ENCODE measurements at regions of chr16 and their contacts with region 1.

Region 1: DNA sequence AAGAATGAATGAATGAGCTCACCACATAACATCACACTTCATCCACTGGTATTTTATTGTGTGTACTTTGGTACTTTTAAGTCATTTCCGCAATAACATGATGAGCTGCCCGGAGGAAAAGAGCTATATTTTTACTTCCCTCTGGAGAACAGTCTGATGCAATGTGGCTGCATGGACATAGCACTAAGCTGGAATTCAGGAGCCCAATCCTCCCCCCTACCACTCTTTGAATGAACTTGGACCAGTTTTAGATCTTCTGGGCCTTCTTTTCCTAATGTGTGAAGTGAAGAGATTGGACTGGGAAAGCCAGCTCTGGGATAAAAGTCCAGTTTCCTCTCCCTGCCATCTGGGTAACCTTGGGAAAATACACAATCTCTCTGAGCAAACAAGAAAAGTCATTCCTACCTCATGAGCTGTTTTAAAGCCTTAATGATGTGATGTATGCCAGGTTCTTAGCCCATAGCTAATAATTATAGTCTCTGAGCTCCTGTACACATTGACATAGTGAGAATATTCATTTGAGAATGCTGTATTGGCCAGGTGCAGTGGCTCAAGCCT is 79.3 kb downstream of the ABCC12 start:
- DNase-seq: no peak
- H3K4me3 ChIP-seq: no peak overlapping the region
- H3K27ac ChIP-seq: no peak overlapping the region
- H3K27me3 ChIP-seq: peaks cover 3% of the 10 kb centered on the region
- CTCF ChIP-seq: no peak

Region 2: DNA sequence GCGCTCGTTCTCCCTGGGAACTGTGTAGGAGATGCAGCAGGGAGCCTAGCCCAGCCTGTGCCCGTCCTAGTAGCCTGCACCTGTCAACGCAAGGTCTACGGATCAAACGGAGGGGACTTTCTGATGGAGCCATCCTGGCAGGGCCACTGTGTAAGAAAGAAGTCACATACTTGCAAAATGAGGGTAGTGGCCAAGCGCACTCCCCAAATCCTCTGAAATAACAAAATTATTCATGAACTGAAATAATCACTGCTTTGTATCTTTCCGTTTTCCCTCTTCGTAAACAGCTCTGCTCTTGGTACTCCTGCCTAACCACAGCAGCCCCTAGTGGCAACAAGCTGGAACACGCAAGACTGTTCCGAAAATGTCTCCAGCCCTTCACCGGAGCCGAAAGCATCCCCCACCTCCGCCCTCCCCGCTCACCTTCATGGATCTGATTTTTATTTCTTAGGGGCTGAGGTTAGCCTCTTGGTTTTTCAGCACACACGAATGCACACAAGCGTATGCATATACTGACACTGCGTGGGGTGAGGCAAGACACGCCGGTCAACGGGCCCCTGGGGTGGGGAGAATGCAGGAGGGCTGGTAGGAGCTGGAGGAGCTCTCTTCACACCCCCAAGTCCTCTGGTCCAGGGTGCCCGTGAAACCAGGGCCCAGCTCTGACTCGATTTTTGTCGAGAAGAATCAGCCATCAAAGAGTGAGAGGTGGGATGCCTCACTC is 21.5 kb before region 1 on chr16:
- CTCF ChIA-PET with region 1: interaction called, 22 read pairs
- POLR2A ChIA-PET with region 1: no interaction called
- DNase-seq: peak; percentile 36
- H3K4me3 ChIP-seq: peak overlapping the region; percentile 32
- H3K27ac ChIP-seq: no peak overlapping the region
- H3K27me3 ChIP-seq: no peaks in the 10 kb centered on the region
- CTCF ChIP-seq: peak; percentile 98